HepG2 (cell line): ENCODE measurements at regions of chr1 and their contacts with region 1.

Region 1: DNA sequence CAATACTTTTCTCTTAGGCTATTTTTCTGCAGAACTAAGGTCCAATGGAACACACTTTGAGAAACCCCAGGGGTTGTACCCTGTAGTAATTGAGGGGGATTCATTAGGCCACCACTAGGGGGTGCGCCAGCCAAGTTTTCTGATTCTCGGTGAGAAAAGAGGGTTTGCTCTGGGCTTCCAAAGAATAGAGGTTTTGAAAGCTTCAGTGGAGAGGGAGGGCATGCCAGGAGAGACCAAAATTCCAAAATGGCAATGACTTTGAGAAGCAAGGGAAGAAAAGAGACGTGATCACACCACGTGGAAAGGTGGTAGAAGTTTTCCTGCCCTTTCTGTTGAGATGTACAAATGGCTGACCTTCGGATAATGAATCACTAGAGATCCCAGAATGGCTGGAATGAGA is 323.3 kb downstream of the RPS6KC1 start:
- DNase-seq: peak; percentile 73
- ATAC-seq: peak; percentile 11; the same call in 1 of the 3 replicates
- H3K4me3 ChIP-seq: no peak overlapping the region
- H3K27ac ChIP-seq: peak overlapping the region; percentile 50
- H3K4me1 ChIP-seq: peaks cover 98% of the 10 kb centered on the region
- H3K27me3 ChIP-seq: no peaks in the 10 kb centered on the region
- CTCF ChIP-seq: peak; percentile 82
- EP300 ChIP-seq: no peak
- POLR2A ChIP-seq: no peak
- RAD21 ChIP-seq: peak; percentile 85

Region 2: DNA sequence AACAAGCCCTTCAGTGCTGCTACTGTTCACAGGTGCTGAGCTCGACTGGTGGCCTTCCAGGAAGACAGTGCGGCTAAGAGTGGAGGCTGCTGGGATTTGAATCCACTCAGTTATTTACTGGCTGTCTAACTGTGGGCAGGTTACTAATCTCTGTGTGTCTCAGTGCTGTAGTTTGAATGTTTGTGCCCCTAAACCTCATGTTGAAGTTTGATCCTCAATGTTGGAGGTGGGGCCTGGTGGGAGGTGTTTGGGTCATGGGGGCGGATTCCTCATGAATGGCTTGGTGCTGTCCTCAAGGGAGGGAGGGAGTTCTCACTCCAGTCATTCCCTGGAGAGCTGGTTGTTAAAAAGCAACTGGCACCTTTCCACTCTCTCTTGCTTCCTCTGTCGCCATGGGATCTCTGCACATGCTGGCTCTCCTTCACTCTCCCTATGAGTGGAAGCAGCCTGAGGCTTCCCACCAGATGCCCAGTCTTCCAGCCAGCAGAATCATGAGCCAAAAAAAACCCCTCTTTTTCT is 11.5 kb after region 1 on chr1:
- CTCF ChIA-PET with region 1: no interaction called
- POLR2A ChIA-PET with region 1: interaction called, 11 read pairs
- in situ Hi-C with region 1: no loop called
- intact Hi-C with region 1: no loop called
- DNase-seq: peak; percentile 73
- ATAC-seq: peak; percentile 83
- H3K4me3 ChIP-seq: no peak overlapping the region
- H3K27ac ChIP-seq: peak overlapping the region; percentile 66
- H3K4me1 ChIP-seq: peaks cover 73% of the 10 kb centered on the region
- H3K27me3 ChIP-seq: no peaks in the 10 kb centered on the region
- CTCF ChIP-seq: no peak
- EP300 ChIP-seq: peak in 1 of 2 experiments; percentile 37; a peak in 2 of 4 replicates
- POLR2A ChIP-seq: no peak
- RAD21 ChIP-seq: no peak

Region 3: GRCh38 chr1:213492161-213493041 is 118.0 kb after region 1 on chr1:
- CTCF ChIA-PET with region 1: no interaction called
- POLR2A ChIA-PET with region 1: interaction called, 5 read pairs
- in situ Hi-C with region 1: no loop called
- intact Hi-C with region 1: loop called (anchors 5 kb)
- DNase-seq: peak; percentile 94
- ATAC-seq: peak; percentile 99
- H3K4me3 ChIP-seq: no peak overlapping the region; a peak in 1 of 6 replicates
- H3K27ac ChIP-seq: peak overlapping the region; percentile 73
- H3K4me1 ChIP-seq: peaks cover 34% of the 10 kb centered on the region
- H3K27me3 ChIP-seq: no peaks in the 10 kb centered on the region
- CTCF ChIP-seq: peak; percentile 42
- EP300 ChIP-seq: peak; percentile 71 to 96; a peak in 3 of 4 replicates
- POLR2A ChIP-seq: no peak
- RAD21 ChIP-seq: no peak

Region 4: DNA sequence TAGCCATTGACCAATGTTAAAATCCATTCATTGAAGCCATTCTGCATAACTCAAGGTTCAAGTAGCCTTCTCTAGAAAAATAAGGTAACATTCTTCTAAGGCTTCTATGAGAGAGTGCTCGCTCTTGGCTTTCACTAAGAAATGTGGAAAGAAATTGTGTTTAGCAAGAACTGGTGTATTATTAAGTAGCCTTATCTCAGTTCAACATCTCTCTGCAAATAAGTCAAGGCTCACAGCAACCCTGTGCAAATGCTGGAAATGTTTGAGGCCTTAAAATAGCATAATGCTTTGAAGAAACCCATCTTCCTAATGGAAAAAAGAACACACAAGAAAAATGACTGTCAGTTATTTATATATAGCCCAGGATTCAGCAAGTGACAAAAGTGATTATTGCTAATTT is 359.3 kb after region 1 on chr1:
- CTCF ChIA-PET with region 1: no interaction called
- POLR2A ChIA-PET with region 1: no interaction called
- in situ Hi-C with region 1: no loop called
- intact Hi-C with region 1: loop called (anchors 10 kb)
- DNase-seq: peak; percentile 85
- ATAC-seq: peak; percentile 76
- H3K4me3 ChIP-seq: no peak overlapping the region
- H3K27ac ChIP-seq: peak overlapping the region; percentile 34
- H3K4me1 ChIP-seq: peaks cover 74% of the 10 kb centered on the region
- H3K27me3 ChIP-seq: no peaks in the 10 kb centered on the region
- CTCF ChIP-seq: no peak
- EP300 ChIP-seq: peak in 1 of 2 experiments; percentile 89; a peak in 2 of 4 replicates
- POLR2A ChIP-seq: no peak
- RAD21 ChIP-seq: no peak

Region 5: DNA sequence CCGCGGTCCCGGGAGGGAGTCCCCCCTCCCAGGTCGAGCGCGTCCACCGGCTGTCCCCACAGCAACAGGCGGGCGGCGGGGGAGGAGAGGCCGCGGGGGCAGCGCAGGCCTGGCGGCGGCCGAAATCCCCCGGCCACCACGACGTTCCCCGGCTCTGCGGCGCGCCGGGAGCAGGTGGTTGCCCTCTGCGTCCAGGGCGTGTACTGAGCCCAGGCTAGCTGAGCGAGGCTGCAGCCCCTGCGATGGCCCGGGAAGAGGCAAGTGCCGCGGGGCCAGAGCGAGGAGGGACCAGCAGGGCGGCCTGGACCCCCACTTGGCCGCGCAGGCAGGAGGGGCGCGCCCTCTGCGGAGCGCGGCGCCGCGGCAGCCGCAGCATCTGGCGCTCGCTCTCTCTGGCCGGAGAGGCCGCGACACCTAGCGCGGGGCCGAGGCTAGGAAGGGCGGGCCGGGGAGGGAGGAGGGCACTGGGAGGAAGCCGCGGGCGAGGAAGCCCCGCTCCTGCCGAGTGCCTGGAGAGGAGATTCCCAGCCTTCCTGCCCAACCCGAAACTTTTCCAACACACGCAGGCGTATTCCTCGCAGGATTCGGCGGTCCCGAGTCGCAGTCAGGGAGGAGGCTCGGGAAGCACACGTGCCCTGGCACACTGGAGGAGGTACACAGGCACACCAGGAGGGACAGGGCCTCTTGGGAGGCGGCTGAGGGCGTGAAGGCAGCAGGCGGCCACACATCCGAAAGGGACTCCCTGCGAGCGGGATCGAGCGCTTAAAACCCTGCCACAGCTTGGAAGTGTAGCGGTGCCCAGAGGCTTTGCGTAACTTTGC is 608.5 kb after region 1 on chr1:
- CTCF ChIA-PET with region 1: no interaction called
- POLR2A ChIA-PET with region 1: interaction called, 36 read pairs
- in situ Hi-C with region 1: loop called (anchors 10 kb)
- intact Hi-C with region 1: loop called (anchors 1 kb)
- DNase-seq: no peak
- ATAC-seq: peak; percentile 78
- H3K4me3 ChIP-seq: peak overlapping the region; percentile 26 to 60 (median 54); a peak in 4 of 6 replicates
- H3K27ac ChIP-seq: no peak overlapping the region
- H3K4me1 ChIP-seq: peaks cover 59% of the 10 kb centered on the region
- H3K27me3 ChIP-seq: no peaks in the 10 kb centered on the region
- CTCF ChIP-seq: peak; percentile 69
- EP300 ChIP-seq: no peak
- POLR2A ChIP-seq: 0 out of 4 replicates have a peak, but pooled peaks of 1 of the 2 experiments have one; percentile 19
- RAD21 ChIP-seq: peak; percentile 50; the same call in 1 of the 2 replicates

Region 6: DNA sequence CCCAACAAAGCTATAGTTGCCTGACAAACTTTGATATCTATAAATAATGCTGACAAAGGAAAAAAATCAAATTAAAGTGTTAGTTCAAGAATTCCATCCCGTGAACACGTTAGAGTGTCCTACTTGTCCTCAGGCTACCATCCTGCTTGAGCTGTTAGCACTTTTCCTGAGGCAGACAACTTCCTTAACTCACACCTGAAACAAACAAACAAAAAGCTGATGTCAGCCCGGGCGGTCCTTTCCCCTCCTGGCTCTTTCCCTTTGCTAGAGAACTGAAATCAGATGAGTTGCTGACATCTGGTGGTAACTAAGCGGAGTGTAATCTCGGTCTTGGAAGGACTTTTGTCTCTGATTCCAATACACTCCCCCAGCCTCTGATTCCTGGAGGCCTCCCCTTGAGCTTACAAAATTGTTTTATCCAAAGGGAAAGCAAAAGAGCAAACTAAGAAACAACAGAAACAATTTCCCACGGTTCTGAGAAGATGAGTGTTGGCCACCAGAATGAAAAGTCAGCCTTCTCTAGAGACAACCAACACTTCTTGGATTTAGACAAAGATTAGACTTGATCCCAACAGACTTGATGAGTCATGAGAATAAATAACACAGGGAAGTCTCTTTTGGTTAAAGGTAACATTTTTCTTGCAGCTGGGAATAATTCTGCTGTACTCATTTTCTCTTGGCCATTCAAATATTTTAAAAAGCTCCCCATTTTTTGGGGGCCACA is 748.9 kb after region 1 on chr1:
- CTCF ChIA-PET with region 1: no interaction called
- POLR2A ChIA-PET with region 1: interaction called, 3 read pairs
- in situ Hi-C with region 1: loop called (anchors 10 kb)
- intact Hi-C with region 1: loop called (anchors 1 kb)
- DNase-seq: peak; percentile 86
- ATAC-seq: peak; percentile 91
- H3K4me3 ChIP-seq: no peak overlapping the region
- H3K27ac ChIP-seq: peak overlapping the region; percentile 49
- H3K4me1 ChIP-seq: peaks cover 62% of the 10 kb centered on the region
- H3K27me3 ChIP-seq: no peaks in the 10 kb centered on the region
- CTCF ChIP-seq: peak; percentile 92
- EP300 ChIP-seq: peak in 1 of 2 experiments; percentile 42; a peak in 1 of 4 replicates
- POLR2A ChIP-seq: no peak
- RAD21 ChIP-seq: peak; percentile 94